ENCODE measurements at regions of chr5 and their contacts with region 1.

Region 1: GRCh38 chr5:88388476-88389337 is 120.1 kb upstream of the TMEM161B start:
- DNase-seq: no peak
- H3K4me3 ChIP-seq: peak overlapping the region in 55 of 59 donors; percentile 7 to 66 (median 38)
- H3K27ac ChIP-seq: peak overlapping the region; percentile 68 to 99 (median 96)
- H3K27me3 ChIP-seq: no peaks in the 10 kb centered on the region
- CTCF ChIP-seq: no peak

Region 2: DNA sequence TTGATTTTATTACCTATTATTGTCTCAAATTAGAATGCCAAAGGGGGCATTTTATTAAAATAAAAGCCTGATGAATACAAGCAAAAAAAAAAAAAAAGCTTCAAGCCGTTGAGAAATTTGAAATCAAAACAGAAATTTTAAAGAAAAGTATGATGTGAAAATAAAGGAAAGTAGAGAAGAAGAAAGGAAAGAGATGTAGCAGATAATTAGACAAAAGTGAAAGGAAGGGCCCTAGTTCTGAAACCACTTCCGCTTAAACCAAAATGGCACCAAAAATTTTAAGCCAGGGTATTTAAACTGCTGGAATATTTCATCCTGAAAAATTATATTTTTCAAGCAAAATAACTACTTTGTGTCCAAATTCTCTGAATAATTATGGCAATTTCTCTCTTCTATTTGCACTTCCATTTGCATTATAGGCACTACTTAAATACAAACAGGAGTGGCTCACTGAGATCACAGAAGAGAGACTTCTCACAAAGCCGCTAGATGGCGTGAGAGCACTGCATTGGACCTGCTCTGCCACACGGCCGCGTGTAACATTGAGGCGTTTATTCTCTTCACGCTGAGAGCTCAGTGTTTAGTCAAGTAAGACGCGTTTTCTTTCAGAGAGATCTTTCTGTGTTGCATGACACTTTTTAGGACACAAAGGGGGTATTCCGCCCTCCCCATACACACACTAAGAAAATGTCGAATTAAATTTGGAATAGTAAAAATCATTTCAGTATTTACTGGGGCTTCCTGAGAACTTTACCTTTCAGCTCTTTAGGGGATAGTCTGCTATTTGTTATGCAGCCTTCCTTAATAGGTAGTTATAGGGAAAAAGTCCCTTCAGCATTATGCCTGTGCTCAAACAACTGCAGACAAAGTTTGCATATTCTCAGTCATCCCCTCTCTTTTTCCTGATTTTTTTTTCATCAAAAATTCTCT is 607.6 kb before region 1 on chr5:
- intact Hi-C with region 1: loop called in 1 of 2 experiments (anchors 10 kb)
- DNase-seq: peak; percentile 59 to 93 (median 88)
- H3K4me3 ChIP-seq: peak overlapping the region in 50 of 59 donors; percentile 1 to 47 (median 25)
- H3K27ac ChIP-seq: peak overlapping the region in 58 of 59 donors; percentile 25 to 94 (median 82)
- H3K27me3 ChIP-seq: no peaks in the 10 kb centered on the region
- CTCF ChIP-seq: peak; percentile 85 to 99 (median 96)

Region 3: GRCh38 chr5:88251048-88251711 is 137.5 kb before region 1 on chr5:
- intact Hi-C with region 1: no loop called
- DNase-seq: no peak
- H3K4me3 ChIP-seq: no peak overlapping the region
- H3K27ac ChIP-seq: no peak overlapping the region
- H3K27me3 ChIP-seq: no peaks in the 10 kb centered on the region
- CTCF ChIP-seq: no peak

Region 4: GRCh38 chr5:88298425-88298824 is 90.3 kb before region 1 on chr5:
- intact Hi-C with region 1: loop called in 1 of 2 experiments (anchors 10 kb)
- DNase-seq: no peak
- H3K4me3 ChIP-seq: no peak overlapping the region
- H3K27ac ChIP-seq: no peak overlapping the region
- H3K27me3 ChIP-seq: no peaks in the 10 kb centered on the region
- CTCF ChIP-seq: no peak

Region 5: GRCh38 chr5:88425124-88425523 is 36.4 kb after region 1 on chr5:
- intact Hi-C with region 1: no loop called
- DNase-seq: no peak
- H3K4me3 ChIP-seq: no peak overlapping the region
- H3K27ac ChIP-seq: no peak overlapping the region
- H3K27me3 ChIP-seq: no peaks in the 10 kb centered on the region
- CTCF ChIP-seq: no peak

Region 6: GRCh38 chr5:88660947-88661805 is 272.5 kb after region 1 on chr5:
- intact Hi-C with region 1: loop called in 1 of 2 experiments (anchors 5 kb)
- DNase-seq: peak; percentile 96 to 99 (median 98)
- H3K4me3 ChIP-seq: peak overlapping the region; percentile 45 to 93 (median 64)
- H3K27ac ChIP-seq: peak overlapping the region; percentile 43 to 100 (median 98)
- H3K27me3 ChIP-seq: peaks cover 0 to 21% (median 0%) of the 10 kb centered on the region in 45 donors
- CTCF ChIP-seq: peak in 34 of 56 donors; percentile 6 to 53 (median 26)

Region 7: GRCh38 chr5:88674356-88675167 is 285.9 kb after region 1 on chr5:
- intact Hi-C with region 1: loop called (anchors 5 kb)
- DNase-seq: peak; percentile 78 to 90 (median 86)
- H3K4me3 ChIP-seq: peak overlapping the region; percentile 55 to 93 (median 79)
- H3K27ac ChIP-seq: peak overlapping the region; percentile 91 to 100 (median 99)
- H3K27me3 ChIP-seq: peaks cover 0 to 32% (median 0%) of the 10 kb centered on the region in 45 donors
- CTCF ChIP-seq: peak in 15 of 56 donors; percentile 3 to 38 (median 10)

Measured in dorsolateral prefrontal cortex (tissue), 120 donors.